A549 (cell line): ENCODE measurements at regions of chr2 and their contacts with region 1.

Region 1: GRCh38 chr2:27016801-27017325 is 15.9 kb upstream of the TMEM214 start:
- DNase-seq: peak; percentile 79 to 81
- ATAC-seq: peak; percentile 54 to 77; a peak in 4 of 6 replicates
- H3K4me3 ChIP-seq: no peak overlapping the region
- H3K27ac ChIP-seq: peak overlapping the region; percentile 77 to 86
- H3K4me1 ChIP-seq: peaks cover 40% of the 10 kb centered on the region
- CTCF ChIP-seq: peak; percentile 96
- EP300 ChIP-seq: no peak
- POLR2A ChIP-seq: no peak
- RAD21 ChIP-seq: peak; percentile 97 to 98

Region 2: GRCh38 chr2:26970244-26970920 is 46.5 kb before region 1 on chr2 and contains the start of gene MAPRE3:
- CTCF ChIA-PET with region 1: interaction called, 758 read pairs
- POLR2A ChIA-PET with region 1: interaction called, 3 read pairs
- DNase-seq: peak; percentile 83 to 95
- ATAC-seq: peak; percentile 89 to 95
- H3K4me3 ChIP-seq: peak within 1 kb of the TSS; percentile 93
- H3K27ac ChIP-seq: peak within 1 kb of the TSS; percentile 79 to 87
- H3K4me1 ChIP-seq: peaks cover 26% of the 10 kb centered on the region
- CTCF ChIP-seq: no peak
- EP300 ChIP-seq: no peak
- POLR2A ChIP-seq: no peak; the same call in 1 of the 2 replicates
- RAD21 ChIP-seq: no peak
- polyA plus RNA-seq, gene MAPRE3: 12.0 and 12.1 TPM in 2 replicates

Region 3: DNA sequence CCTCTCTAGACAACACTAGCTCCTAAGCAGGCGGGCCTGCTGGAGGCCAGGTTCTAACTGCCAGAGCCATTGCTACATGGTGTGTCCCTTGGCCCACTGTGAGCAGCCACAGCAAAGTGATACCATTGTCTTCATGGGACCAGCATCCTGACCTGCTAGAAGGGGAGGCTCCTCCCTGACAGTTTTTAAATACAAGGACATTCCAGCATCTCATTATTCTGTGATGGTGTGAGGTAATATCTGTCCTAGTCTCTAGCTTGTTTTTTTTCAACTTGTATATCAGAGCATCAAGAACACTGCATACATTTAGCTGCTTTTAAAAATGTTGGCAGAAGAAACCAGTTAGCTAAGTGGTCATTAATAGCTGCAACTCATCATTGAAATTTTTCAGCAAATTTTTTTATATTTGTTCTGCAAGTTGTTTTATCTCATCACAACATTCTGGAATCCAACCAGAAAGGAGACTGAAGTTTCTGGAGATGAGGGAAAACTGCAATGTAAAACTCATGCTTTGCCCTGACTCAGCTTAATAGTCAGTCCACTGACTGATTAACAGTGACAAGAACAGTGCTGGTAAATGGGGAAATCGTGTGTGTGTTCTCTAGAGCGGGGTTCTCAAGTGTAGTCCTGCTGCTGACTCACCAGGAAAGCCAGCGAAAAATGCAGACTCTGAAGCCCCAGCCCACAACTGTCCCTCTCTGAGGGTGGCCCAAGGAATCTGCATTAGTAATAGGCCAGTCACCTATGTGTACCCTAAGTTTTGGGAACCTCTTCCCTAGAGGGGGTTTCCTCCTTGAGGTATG is 28.6 kb before region 1 on chr2:
- CTCF ChIA-PET with region 1: interaction called, 74 read pairs
- POLR2A ChIA-PET with region 1: no interaction called
- DNase-seq: no peak
- ATAC-seq: peak; percentile 51 to 63; a peak in 3 of 6 replicates
- H3K4me3 ChIP-seq: no peak overlapping the region
- H3K27ac ChIP-seq: no peak overlapping the region
- H3K4me1 ChIP-seq: peaks cover 8% of the 10 kb centered on the region; the same call in 1 of the 3 replicates
- CTCF ChIP-seq: no peak
- EP300 ChIP-seq: no peak
- POLR2A ChIP-seq: no peak
- RAD21 ChIP-seq: no peak

Region 4: DNA sequence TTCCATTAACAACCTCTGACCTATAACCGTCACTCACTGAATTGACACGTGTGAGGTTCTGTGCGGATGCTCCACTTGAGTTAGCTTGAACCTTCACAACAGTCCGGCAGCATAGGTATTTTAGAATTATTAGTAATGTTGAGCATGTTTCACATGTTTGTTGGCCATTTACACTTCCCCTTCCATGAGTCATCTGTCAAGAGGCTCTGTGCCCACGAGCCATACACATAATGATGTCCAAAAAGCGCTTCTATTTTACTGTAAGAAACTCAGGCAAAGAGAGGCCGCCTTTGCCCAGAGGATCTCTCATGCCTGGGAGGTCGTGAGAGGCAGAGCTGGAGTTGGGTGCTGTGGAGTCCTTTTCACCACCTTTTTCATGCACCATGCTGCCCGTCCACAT is 13.0 kb before region 1 on chr2:
- CTCF ChIA-PET with region 1: interaction called, 58 read pairs
- POLR2A ChIA-PET with region 1: no interaction called
- DNase-seq: no peak
- ATAC-seq: no peak
- H3K4me3 ChIP-seq: no peak overlapping the region
- H3K27ac ChIP-seq: no peak overlapping the region
- H3K4me1 ChIP-seq: peaks cover 7% of the 10 kb centered on the region; the same call in 1 of the 3 replicates
- CTCF ChIP-seq: no peak
- EP300 ChIP-seq: no peak
- POLR2A ChIP-seq: no peak
- RAD21 ChIP-seq: no peak

Region 5: GRCh38 chr2:27042159-27042661 is 25.3 kb after region 1 on chr2:
- CTCF ChIA-PET with region 1: interaction called, 75 read pairs
- POLR2A ChIA-PET with region 1: no interaction called
- DNase-seq: no peak
- ATAC-seq: no peak
- H3K4me3 ChIP-seq: no peak overlapping the region
- H3K27ac ChIP-seq: no peak overlapping the region
- H3K4me1 ChIP-seq: no peaks in the 10 kb centered on the region
- CTCF ChIP-seq: no peak
- EP300 ChIP-seq: no peak
- POLR2A ChIP-seq: no peak
- RAD21 ChIP-seq: no peak

Region 6: DNA sequence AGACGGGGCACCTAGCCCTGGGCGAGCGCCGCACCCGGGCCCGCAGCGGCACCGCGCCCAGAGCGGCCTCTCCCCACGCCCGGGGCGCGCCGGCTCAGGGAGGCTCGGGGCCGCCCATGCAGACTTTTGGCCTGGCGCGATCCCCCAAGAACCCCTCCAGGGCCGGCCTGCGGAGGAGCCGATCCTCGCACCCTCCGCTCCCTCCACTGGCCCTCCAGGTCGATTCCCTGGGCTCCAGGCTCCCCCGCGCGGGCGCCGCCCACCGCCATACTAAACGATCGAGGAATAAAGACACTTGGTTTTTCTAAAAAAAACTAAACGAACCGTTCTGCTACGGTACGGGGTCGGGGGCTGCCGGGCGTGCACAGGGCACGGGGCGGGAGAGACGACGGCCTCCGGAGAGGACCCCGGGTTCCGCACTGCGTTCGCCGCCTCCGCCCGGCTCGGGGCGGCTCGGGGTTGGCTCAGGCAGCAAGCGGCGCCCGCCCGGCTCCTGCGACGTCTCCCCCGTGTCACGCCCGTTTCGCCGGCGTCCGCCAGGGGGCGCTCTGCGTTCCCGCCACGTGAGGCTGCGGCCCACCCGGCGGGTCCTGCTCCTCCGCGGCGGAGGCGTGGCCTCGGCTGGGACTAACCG is 69.3 kb after region 1 on chr2:
- CTCF ChIA-PET with region 1: interaction called, 11 read pairs
- POLR2A ChIA-PET with region 1: no interaction called
- DNase-seq: peak; percentile 95 to 97
- ATAC-seq: peak; percentile 73 to 89
- H3K4me3 ChIP-seq: peak overlapping the region; percentile 70
- H3K27ac ChIP-seq: peak overlapping the region; percentile 90 to 91
- H3K4me1 ChIP-seq: peaks cover 17% of the 10 kb centered on the region
- CTCF ChIP-seq: peak; percentile 98
- EP300 ChIP-seq: no peak
- POLR2A ChIP-seq: peak; percentile 41; the same call in 1 of the 2 replicates
- RAD21 ChIP-seq: peak; percentile 31 to 63; a peak in 4 of 5 replicates